PC-9 (cell line): ENCODE measurements at regions of chr20 and their contacts with region 1.

Region 1: DNA sequence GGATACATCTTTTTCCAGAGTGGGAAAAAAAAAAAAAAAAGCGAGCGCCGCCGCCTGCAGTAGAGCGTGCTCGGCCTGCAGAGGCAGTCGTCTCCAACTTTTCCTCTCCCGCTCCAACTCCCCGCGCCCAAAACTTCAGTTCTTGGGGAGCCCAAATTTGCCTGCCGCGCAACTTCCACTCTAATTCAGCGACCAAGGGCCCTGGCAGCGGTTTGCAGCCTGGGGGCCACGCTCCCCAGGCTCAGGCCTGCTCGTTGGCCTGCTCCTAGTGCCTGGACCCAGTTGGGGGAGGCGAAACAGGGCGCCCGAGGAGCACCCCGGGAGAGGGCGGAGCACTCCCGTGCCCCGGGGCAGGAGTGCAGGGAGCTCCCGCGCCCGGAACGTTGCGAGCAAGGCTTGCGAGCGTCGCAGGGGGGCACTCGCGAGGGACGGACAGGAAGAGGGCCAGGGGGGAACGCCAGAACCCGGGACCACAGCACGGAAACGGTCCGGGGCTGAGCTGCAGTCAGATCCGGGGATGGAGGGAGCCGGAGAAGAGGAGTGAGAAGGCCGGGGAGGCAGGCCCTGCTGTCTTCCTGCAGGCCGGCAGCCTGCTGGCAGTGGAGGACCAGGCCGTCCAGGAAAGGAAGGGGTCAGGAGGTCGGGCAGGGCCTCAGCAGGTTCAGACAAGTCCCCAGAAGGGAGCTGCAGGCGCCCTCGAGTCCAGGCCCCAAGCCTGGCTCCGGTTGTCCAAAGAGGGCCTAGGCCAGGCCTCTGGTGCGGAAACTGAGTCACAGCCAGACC is at the start of gene STX16:
- DNase-seq: peak; percentile 88 to 93
- H3K4me3 ChIP-seq: peak within 1 kb of the TSS; percentile 95
- H3K27ac ChIP-seq: peak within 1 kb of the TSS; percentile 77
- H3K4me1 ChIP-seq: peaks cover 25% of the 10 kb centered on the region
- H3K27me3 ChIP-seq: no peaks in the 10 kb centered on the region
- CTCF ChIP-seq: peak; percentile 87
- total RNA-seq, gene STX16: 76.3 and 85.5 TPM in 2 replicates

Region 2: DNA sequence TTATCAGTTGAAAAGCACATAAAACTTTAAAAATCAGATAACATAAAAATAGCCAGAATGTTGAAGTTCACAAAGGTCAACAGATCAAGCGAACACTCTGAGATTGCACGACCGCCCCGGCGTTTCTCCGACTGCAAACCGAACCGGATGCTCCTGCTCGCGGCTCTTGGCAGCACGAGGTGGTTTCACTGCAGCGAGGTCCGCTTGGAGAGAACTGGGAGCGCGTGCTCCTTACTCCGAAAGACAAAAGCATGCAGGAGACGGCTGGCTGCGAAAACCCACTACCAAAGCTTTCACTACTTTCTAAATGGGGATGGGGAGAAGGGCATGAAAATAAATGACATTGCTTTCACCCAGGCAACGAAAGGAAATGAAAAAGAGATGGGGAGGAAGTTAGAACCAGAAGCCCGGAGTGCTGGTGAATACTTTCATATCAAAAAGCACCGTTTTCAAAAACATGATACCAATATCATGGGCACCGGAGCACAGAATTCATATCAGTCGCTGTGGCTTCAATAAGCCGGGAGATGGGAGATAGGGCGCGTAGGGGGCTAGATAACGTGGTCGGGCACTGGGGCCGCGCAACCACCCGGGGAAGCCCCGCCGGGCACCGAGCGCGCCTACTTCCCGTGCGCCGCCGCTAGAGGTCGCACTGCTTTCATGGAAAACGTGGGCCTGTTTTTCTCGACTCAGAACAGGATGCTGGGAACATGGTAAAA is 414.2 kb before region 1 on chr20:
- CTCF ChIA-PET with region 1: no interaction called
- POLR2A ChIA-PET with region 1: no interaction called
- intact Hi-C with region 1: loop called (anchors 5 kb)
- DNase-seq: peak; percentile 51 to 75
- H3K4me3 ChIP-seq: peak overlapping the region; percentile 68
- H3K27ac ChIP-seq: no peak overlapping the region
- H3K4me1 ChIP-seq: peaks cover 8% of the 10 kb centered on the region; the same call in 1 of the 2 replicates
- H3K27me3 ChIP-seq: no peaks in the 10 kb centered on the region
- CTCF ChIP-seq: peak; percentile 97

Region 3: GRCh38 chr20:58481481-58482021 is 169.4 kb before region 1 on chr20:
- CTCF ChIA-PET with region 1: interaction called, 5 read pairs
- POLR2A ChIA-PET with region 1: interaction called, 4 read pairs
- intact Hi-C with region 1: loop called (anchors 10 kb)
- DNase-seq: peak; percentile 49 to 50
- H3K4me3 ChIP-seq: no peak overlapping the region
- H3K27ac ChIP-seq: no peak overlapping the region
- H3K4me1 ChIP-seq: no peaks in the 10 kb centered on the region
- H3K27me3 ChIP-seq: no peaks in the 10 kb centered on the region
- CTCF ChIP-seq: peak; percentile 91

Region 4: DNA sequence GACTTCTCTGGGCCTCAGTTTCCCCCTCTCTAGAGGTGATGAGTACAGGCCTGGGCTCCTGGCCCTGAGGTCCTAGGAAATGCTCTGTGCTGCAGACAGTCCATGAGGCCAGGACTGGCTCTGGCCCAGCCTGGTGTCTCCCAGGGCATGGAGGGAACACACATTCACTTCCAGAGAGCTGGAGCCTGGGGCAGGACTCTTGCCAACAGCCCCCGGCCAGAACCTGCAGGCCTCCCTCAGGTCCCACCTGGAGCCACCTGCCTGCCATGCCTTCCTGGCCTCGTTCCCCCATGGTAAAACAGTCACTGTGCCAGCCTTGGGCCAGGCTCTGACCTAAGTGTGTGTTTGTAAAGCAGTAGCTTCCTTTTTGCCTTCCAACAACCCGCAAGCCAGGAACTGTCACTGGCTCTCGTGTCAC is 39.3 kb before region 1 on chr20:
- CTCF ChIA-PET with region 1: no interaction called
- POLR2A ChIA-PET with region 1: no interaction called
- intact Hi-C with region 1: loop called (anchors 1 kb)
- DNase-seq: peak; percentile 7 to 45
- H3K4me3 ChIP-seq: no peak overlapping the region
- H3K27ac ChIP-seq: peak overlapping the region; percentile 46
- H3K4me1 ChIP-seq: peaks cover 34% of the 10 kb centered on the region
- H3K27me3 ChIP-seq: no peaks in the 10 kb centered on the region
- CTCF ChIP-seq: no peak

Region 5: DNA sequence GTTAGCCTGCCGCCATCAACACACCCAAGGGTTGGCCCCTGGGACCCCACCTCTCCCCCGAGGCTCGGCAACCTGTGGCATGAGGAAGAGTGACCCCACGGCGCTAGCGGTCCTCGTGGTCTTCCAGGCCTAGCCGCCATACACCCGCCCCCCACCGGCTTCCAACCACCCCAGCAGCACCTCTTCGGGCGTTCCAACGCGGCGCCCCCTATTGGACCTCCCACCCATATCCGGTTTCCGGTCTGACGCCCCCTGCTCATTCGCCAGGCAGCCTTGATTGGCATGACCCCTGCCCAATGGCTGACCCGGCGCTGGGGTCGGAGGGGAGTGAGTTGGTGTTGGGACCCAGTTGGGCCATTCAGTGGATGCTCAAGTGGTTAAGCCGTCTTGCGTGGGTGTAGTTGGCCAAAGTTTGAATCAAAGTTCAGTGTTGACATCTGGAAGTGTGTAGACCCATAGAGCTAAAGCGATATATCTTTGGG is 199.8 kb after region 1 on chr20 and contains the start of gene GNAS-AS1:
- CTCF ChIA-PET with region 1: no interaction called
- POLR2A ChIA-PET with region 1: no interaction called
- intact Hi-C with region 1: loop called (anchors 5 kb)
- DNase-seq: peak; percentile 71 to 90
- H3K4me3 ChIP-seq: peak within 1 kb of the TSS; percentile 73
- H3K27ac ChIP-seq: no peak within 1 kb of the TSS
- H3K4me1 ChIP-seq: peaks cover 4% of the 10 kb centered on the region; the same call in 1 of the 2 replicates
- H3K27me3 ChIP-seq: peaks cover 33% of the 10 kb centered on the region
- CTCF ChIP-seq: no peak; the same call in 1 of the 2 replicates
- total RNA-seq, gene GNAS-AS1: 5.7 and 6.8 TPM in 2 replicates